GM12878 (cell line): ENCODE measurements at regions of chr3 and their contacts with region 1.

Region 1: DNA sequence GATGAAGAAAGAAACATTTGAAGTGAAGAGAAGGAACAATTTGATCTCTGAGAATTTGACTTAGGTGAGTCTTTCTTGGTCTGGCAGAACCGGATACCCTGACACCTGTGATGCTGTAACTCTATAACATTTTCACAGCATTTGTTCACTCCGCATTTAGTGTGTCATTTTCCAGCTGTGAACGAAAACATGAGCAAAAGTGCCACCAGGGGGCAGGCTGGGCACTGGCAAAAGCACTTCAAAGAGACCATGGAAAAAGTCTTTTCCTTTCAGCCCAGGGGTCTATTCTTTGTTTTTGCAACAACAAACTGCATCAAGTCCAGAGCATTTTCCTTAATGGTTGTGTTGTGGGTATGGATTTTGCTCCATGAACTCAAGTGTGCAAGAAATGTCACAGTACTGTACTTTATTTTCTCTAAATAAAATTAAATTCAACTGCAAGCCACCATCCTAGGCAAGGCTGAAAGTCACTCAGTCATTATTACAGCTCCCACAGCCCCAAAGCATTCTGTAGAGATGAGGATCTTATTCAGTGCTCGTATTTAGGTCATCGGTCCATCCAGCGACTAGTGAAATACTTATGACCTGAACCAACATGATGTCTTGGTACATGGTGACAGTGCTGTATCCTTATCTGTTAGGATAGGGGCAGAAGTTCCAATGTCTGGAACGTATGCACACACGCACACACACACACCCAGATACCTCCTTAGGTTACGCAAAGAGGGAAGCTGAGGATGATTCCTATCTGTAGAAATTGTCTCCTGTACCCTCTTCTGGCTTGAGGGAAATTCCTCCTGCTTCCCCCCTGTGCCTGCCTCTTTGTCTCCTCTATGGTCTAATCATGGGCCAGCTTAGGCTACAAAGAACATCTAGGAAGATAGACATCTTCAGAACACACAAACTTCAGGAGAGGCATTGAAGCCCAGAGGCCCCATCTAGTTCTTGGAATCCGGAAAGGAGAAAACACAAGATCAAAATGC is 125.5 kb downstream of the GADL1 start:
- DNase-seq: no peak
- ATAC-seq: peak; percentile 75
- H3K4me3 ChIP-seq: no peak overlapping the region
- H3K27ac ChIP-seq: no peak overlapping the region
- H3K4me1 ChIP-seq: no peaks in the 10 kb centered on the region
- H3K27me3 ChIP-seq: no peaks in the 10 kb centered on the region; a peak in 2 of 4 replicates
- CTCF ChIP-seq: peak; percentile 77
- EP300 ChIP-seq: no peak
- POLR2A ChIP-seq: no peak
- RAD21 ChIP-seq: peak; percentile 82

Region 2: GRCh38 chr3:30042274-30042859 is 726.6 kb before region 1 on chr3:
- CTCF ChIA-PET with region 1: interaction called, 4 read pairs
- POLR2A ChIA-PET with region 1: no interaction called
- RAD21 ChIA-PET with region 1: no interaction called
- SMC1A ChIA-PET with region 1: no interaction called
- in situ Hi-C with region 1: no loop called
- intact Hi-C with region 1: loop called (anchors 10 kb)
- DNase-seq: peak; percentile 1
- ATAC-seq: peak; percentile 88
- H3K4me3 ChIP-seq: no peak overlapping the region
- H3K27ac ChIP-seq: no peak overlapping the region
- H3K4me1 ChIP-seq: no peaks in the 10 kb centered on the region
- H3K27me3 ChIP-seq: no peaks in the 10 kb centered on the region
- CTCF ChIP-seq: peak; percentile 57 to 68 (median 59); a peak in 5 of 6 replicates
- EP300 ChIP-seq: no peak
- POLR2A ChIP-seq: no peak
- RAD21 ChIP-seq: peak; percentile 71

Region 3: GRCh38 chr3:30779686-30780287 is 10.8 kb after region 1 on chr3:
- CTCF ChIA-PET with region 1: interaction called, 20 read pairs
- POLR2A ChIA-PET with region 1: no interaction called
- RAD21 ChIA-PET with region 1: interaction called, 4 read pairs
- SMC1A ChIA-PET with region 1: interaction called, 4 read pairs
- in situ Hi-C with region 1: no loop called
- intact Hi-C with region 1: no loop called
- DNase-seq: no peak
- ATAC-seq: peak; percentile 55; the same call in 2 of the 3 replicates
- H3K4me3 ChIP-seq: no peak overlapping the region
- H3K27ac ChIP-seq: no peak overlapping the region
- H3K4me1 ChIP-seq: no peaks in the 10 kb centered on the region
- H3K27me3 ChIP-seq: no peaks in the 10 kb centered on the region; a peak in 1 of 4 replicates
- CTCF ChIP-seq: peak; percentile 53 to 57 (median 53); a peak in 5 of 6 replicates
- EP300 ChIP-seq: no peak
- POLR2A ChIP-seq: no peak
- RAD21 ChIP-seq: peak; percentile 54